ENCODE measurements at regions of chr11 and their contacts with region 1.

Region 1: GRCh38 chr11:3854977-3855807 is at the start of gene STIM1:
- DNase-seq: peak; percentile 92 to 96
- H3K4me3 ChIP-seq: peak within 1 kb of the TSS; percentile 89 to 93
- H3K27ac ChIP-seq: peak within 1 kb of the TSS; percentile 93 to 98
- H3K4me1 ChIP-seq: peaks cover 0 to 46% (median 39%) of the 10 kb centered on the region in 4 donors
- H3K27me3 ChIP-seq: no peaks in the 10 kb centered on the region
- CTCF ChIP-seq: peak; percentile 96 to 99

Region 2: GRCh38 chr11:3880724-3881123 is 25.5 kb after region 1 on chr11:
- intact Hi-C with region 1: no loop called
- DNase-seq: no peak
- H3K4me3 ChIP-seq: no peak overlapping the region
- H3K27ac ChIP-seq: peak overlapping the region; percentile 21 to 65
- H3K4me1 ChIP-seq: peaks cover 0 to 44% (median 18%) of the 10 kb centered on the region in 4 donors
- H3K27me3 ChIP-seq: no peaks in the 10 kb centered on the region
- CTCF ChIP-seq: no peak

Region 3: GRCh38 chr11:3929649-3930048 is 74.5 kb after region 1 on chr11:
- intact Hi-C with region 1: no loop called
- DNase-seq: no peak
- H3K4me3 ChIP-seq: no peak overlapping the region
- H3K27ac ChIP-seq: no peak overlapping the region
- H3K4me1 ChIP-seq: peaks cover 0 to 43% (median 13%) of the 10 kb centered on the region in 4 donors
- H3K27me3 ChIP-seq: no peaks in the 10 kb centered on the region
- CTCF ChIP-seq: no peak

Region 4: GRCh38 chr11:3947061-3947460 is 91.9 kb after region 1 on chr11:
- intact Hi-C with region 1: loop called (anchors 5 kb)
- DNase-seq: peak in 1 of 2 donors; percentile 38
- H3K4me3 ChIP-seq: no peak overlapping the region
- H3K27ac ChIP-seq: peak overlapping the region; percentile 76 to 83
- H3K4me1 ChIP-seq: peaks cover 4 to 98% (median 73%) of the 10 kb centered on the region in 4 donors
- H3K27me3 ChIP-seq: no peaks in the 10 kb centered on the region
- CTCF ChIP-seq: no peak

Region 5: DNA sequence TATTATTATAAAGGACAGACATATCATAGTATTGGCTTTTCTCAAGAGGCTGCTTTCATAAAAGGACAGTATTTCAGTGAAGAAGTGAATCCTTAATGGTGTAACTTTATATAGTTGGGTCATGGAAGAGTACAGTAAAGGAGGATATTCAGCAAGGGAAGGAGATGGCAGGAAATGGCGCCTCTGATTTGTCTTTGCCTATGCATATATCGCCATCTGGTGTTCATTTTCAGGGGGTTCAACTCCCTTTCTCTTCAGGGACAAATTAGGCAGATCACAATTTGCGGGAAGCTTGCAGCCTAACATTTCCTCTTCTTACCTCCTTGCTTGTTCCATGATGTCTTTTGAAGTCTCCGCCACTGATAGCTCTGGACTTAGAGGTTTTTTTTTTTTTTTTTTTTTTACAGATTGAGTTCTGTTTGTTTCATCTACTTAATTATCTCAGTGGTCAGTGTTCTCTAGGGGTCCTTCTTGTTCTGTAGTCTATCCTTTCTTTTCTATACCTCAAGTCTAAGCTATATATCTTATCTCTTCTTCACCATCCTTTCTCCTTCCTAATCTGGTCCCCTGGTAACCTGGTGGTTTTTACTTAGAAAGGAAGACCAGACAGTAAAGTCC is 217.6 kb after region 1 on chr11:
- intact Hi-C with region 1: loop called (anchors 2 kb)
- DNase-seq: no peak
- H3K4me3 ChIP-seq: no peak overlapping the region
- H3K27ac ChIP-seq: no peak overlapping the region
- H3K4me1 ChIP-seq: peaks cover 0 to 22% (median 9%) of the 10 kb centered on the region in 4 donors
- H3K27me3 ChIP-seq: no peaks in the 10 kb centered on the region
- CTCF ChIP-seq: peak; percentile 81 to 92

Measured in tibial artery (tissue), 4 donors.